Caco-2 (cell line): ENCODE measurements at regions of chr17 and their contacts with region 1.

Region 1: DNA sequence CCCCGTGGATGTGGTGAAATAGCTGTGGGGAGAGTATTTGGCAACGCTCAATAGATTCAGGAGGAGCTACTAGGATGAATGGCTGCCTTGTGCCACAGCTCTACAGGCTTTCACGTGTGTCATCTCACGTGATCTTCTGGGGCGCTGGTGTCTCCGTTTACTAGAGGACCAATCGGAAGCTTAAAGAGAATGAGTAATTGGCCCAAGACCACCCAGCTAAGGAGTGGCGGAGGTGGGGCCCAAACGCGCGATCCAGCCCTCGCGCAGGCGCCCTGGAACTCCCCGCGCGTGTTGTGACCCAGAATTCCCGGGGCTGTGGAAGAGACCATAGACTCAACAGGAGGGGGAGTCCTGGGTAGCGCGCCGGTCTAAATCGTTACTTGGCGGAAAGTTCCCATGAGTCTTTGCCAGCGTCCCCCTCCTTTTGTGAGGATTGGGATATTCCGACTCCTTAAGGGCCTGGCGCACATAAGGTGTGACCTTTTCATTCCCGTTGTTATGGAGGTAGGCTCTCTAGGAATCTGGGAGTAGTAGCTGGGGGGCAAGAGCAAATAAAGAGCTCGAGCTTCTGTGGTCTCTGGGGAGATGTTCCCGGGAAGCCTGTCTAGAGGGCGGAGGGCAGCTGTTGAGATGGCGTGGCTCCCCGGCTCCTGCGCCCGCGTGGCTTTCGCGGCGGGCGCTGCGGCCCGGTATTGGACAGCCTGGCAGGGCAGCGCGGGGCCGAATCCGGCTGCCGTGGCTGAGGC is 23.4 kb downstream of the TRPV2 start:
- DNase-seq: peak; percentile 99
- H3K4me3 ChIP-seq: peak overlapping the region; percentile 91
- H3K4me3 Mint-ChIP-seq: peak overlapping the region; percentile 86
- H3K27ac Mint-ChIP-seq: peak overlapping the region; percentile 93
- H3K4me1 ChIP-seq: peaks cover 38% of the 10 kb centered on the region
- H3K4me1 Mint-ChIP-seq: peaks cover 34% of the 10 kb centered on the region
- H3K27me3 ChIP-seq: no peaks in the 10 kb centered on the region
- H3K27me3 Mint-ChIP-seq: no peaks in the 10 kb centered on the region
- CTCF ChIP-seq: no peak

Region 2: DNA sequence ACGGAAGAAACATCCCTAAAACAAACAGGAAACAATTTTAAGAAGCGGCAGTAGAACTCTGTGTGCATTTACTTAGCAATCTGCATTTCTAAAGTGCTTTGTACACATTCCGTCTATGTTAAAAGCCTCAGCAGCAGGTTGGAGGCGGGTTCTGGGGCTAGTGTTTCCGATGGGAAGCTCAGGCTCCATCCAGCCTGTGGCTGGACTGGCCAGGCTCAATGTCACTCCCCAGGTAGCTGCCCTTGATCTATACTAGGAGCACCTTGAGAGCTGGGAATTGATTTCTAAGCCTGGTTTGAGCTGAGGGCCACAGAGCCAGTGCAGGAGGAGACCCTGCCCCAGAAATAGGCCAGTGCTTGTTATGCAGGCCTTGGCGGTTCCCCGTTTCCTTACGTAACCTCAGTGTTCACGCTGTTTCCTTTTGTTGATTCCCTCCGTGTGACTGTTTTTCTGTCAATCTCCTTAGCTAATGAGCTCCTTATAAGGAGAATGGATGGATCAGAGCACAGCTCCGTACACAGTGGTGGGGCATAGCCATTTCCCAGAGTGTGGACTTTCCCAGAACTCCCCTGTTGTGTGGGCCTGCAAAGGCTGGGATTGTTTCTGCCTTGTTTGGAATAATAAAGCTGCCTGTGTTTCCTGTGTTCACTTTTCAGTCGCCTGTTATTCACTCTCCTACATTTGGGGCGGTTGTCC is 472.4 kb before region 1 on chr17:
- CTCF ChIA-PET with region 1: no interaction called
- POLR2A ChIA-PET with region 1: no interaction called
- intact Hi-C with region 1: no loop called
- DNase-seq: peak; percentile 59 to 67
- H3K4me3 ChIP-seq: no peak overlapping the region
- H3K4me3 Mint-ChIP-seq: no peak overlapping the region
- H3K27ac Mint-ChIP-seq: no peak overlapping the region
- H3K4me1 ChIP-seq: peaks cover 9% of the 10 kb centered on the region
- H3K4me1 Mint-ChIP-seq: peaks cover 6% of the 10 kb centered on the region
- H3K27me3 ChIP-seq: no peaks in the 10 kb centered on the region
- H3K27me3 Mint-ChIP-seq: no peaks in the 10 kb centered on the region
- CTCF ChIP-seq: no peak

Region 3: DNA sequence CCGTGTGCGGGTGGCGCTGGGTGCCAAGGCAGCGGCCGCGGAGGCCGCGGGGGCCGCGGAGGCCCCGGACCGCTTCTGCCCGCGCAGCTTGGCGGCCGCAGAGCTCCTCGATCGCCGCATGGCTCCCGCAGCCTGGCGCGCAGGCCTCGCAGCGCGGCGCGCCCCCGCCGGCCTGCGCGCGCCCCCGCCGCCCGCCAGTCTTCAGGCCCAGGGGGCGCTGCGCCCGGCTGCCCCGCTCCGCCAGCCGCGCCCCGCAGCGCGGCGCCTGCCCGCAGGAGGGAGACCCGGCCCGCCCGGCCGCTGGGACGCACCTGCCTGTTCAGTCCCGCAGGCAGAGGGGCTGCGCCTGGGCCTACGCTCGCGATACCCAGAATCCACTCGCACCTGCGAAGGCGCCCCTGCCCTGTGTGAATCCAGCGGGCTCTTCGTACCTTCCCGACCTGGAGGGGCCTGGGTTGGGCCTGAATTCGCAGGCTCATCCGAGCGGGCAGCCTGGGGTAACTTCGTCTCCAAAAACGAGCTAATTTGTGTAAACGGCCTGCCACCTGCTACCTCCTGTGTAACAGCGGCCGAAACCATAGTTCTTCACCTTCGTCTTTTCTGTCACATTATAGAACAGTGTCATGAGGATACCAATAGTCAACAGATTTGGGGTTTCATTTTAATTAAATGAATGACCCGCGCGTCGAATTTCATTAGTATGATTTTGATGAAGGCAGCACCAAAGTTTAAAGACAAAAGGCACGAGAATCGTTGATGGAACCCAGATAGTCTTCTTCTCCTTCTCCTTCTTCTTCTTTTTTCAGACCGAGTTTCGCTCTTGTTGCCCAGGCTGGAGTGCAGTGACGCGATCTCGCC is 85.2 kb before region 1 on chr17 and contains the start of gene CENPV:
- CTCF ChIA-PET with region 1: no interaction called
- POLR2A ChIA-PET with region 1: interaction called, 15 read pairs
- intact Hi-C with region 1: no loop called
- DNase-seq: peak; percentile 74 to 82
- H3K4me3 ChIP-seq: peak within 1 kb of the TSS; percentile 56
- H3K4me3 Mint-ChIP-seq: peak within 1 kb of the TSS; percentile 93
- H3K27ac Mint-ChIP-seq: peak within 1 kb of the TSS; percentile 88
- H3K4me1 ChIP-seq: peaks cover 7% of the 10 kb centered on the region; the same call in 1 of the 2 replicates
- H3K4me1 Mint-ChIP-seq: no peaks in the 10 kb centered on the region
- H3K27me3 ChIP-seq: no peaks in the 10 kb centered on the region
- H3K27me3 Mint-ChIP-seq: no peaks in the 10 kb centered on the region
- CTCF ChIP-seq: no peak
- total RNA-seq, gene CENPV: 92.8 and 103 TPM in 2 replicates

Region 4: GRCh38 chr17:16380640-16381495 is 57.9 kb before region 1 on chr17 and contains the start of gene UBB:
- CTCF ChIA-PET with region 1: interaction called, 4 read pairs
- POLR2A ChIA-PET with region 1: interaction called, 41 read pairs
- intact Hi-C with region 1: loop called (anchors 1 kb)
- DNase-seq: peak; percentile 98 to 99
- H3K4me3 ChIP-seq: peak within 1 kb of the TSS; percentile 72
- H3K4me3 Mint-ChIP-seq: peak within 1 kb of the TSS; percentile 93
- H3K27ac Mint-ChIP-seq: peak within 1 kb of the TSS; percentile 100
- H3K4me1 ChIP-seq: no peaks in the 10 kb centered on the region
- H3K4me1 Mint-ChIP-seq: peaks cover 7% of the 10 kb centered on the region
- H3K27me3 ChIP-seq: no peaks in the 10 kb centered on the region
- H3K27me3 Mint-ChIP-seq: no peaks in the 10 kb centered on the region
- CTCF ChIP-seq: no peak
- total RNA-seq, gene UBB: 1,900 and 1,904 TPM in 2 replicates

Region 5: DNA sequence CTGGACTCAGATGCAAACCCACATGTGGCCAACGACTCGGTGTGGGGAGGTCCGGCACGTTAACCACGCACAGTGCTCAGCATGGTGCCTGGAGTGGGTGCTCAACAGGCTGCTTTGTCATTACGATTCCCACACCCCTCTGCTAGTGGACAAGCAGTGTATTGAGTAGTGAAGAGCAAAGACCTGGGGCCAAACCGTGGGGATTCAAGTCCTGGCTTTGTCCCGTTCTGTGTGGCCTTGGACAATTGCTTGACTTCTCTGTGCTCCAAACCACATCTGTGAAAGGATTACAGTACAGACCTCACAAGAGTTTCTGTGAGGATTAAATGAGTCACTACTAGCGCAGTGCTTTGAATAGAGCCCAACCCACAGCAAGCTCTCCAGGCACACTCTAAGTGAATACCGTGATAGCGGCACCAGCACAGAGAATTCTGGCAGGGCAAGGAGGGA is 10.4 kb after region 1 on chr17:
- CTCF ChIA-PET with region 1: interaction called, 4 read pairs
- POLR2A ChIA-PET with region 1: interaction called, 21 read pairs
- intact Hi-C with region 1: no loop called
- DNase-seq: no peak
- H3K4me3 ChIP-seq: no peak overlapping the region
- H3K4me3 Mint-ChIP-seq: no peak overlapping the region
- H3K27ac Mint-ChIP-seq: no peak overlapping the region
- H3K4me1 ChIP-seq: peaks cover 6% of the 10 kb centered on the region; the same call in 1 of the 2 replicates
- H3K4me1 Mint-ChIP-seq: peaks cover 8% of the 10 kb centered on the region
- H3K27me3 ChIP-seq: no peaks in the 10 kb centered on the region
- H3K27me3 Mint-ChIP-seq: no peaks in the 10 kb centered on the region
- CTCF ChIP-seq: no peak

Region 6: GRCh38 chr17:16537130-16537458 is 98.4 kb after region 1 on chr17:
- CTCF ChIA-PET with region 1: interaction called, 3 read pairs
- POLR2A ChIA-PET with region 1: interaction called, 27 read pairs
- intact Hi-C with region 1: no loop called
- DNase-seq: no peak
- H3K4me3 ChIP-seq: no peak overlapping the region
- H3K4me3 Mint-ChIP-seq: peak overlapping the region; percentile 99
- H3K27ac Mint-ChIP-seq: peak overlapping the region; percentile 32
- H3K4me1 ChIP-seq: 0 out of 2 replicates have a peak, but pooled peaks cover 8% of the 10 kb centered on the region
- H3K4me1 Mint-ChIP-seq: no peaks in the 10 kb centered on the region
- H3K27me3 ChIP-seq: no peaks in the 10 kb centered on the region
- H3K27me3 Mint-ChIP-seq: no peaks in the 10 kb centered on the region
- CTCF ChIP-seq: no peak